Activated CD8-positive, alpha-beta memory T cell treated with anti-CD3 and anti-CD28 coated beads, Interleukin-2, amount 10 ng/mL, durations not matched to agents 7 days and 5 days (primary cell): ENCODE measurements at regions of chr19 and their contacts with region 1.

Region 1: GRCh38 chr19:10269333-10270179 is 1.4 kb upstream of the ICAM1 start:
- DNase-seq: peak; percentile 93
- ATAC-seq: peak; percentile 68
- H3K4me3 Mint-ChIP-seq: peak overlapping the region; percentile 81
- H3K27ac Mint-ChIP-seq: peak overlapping the region; percentile 89
- H3K4me1 Mint-ChIP-seq: peaks cover 32% of the 10 kb centered on the region
- H3K27me3 Mint-ChIP-seq: no peaks in the 10 kb centered on the region

Region 2: GRCh38 chr19:10069046-10069445 is 200.5 kb before region 1 on chr19:
- CTCF ChIA-PET with region 1: no interaction called
- DNase-seq: no peak
- ATAC-seq: no peak
- H3K4me3 Mint-ChIP-seq: no peak overlapping the region
- H3K27ac Mint-ChIP-seq: no peak overlapping the region
- H3K4me1 Mint-ChIP-seq: peaks cover 10% of the 10 kb centered on the region
- H3K27me3 Mint-ChIP-seq: peaks cover 7% of the 10 kb centered on the region

Region 3: DNA sequence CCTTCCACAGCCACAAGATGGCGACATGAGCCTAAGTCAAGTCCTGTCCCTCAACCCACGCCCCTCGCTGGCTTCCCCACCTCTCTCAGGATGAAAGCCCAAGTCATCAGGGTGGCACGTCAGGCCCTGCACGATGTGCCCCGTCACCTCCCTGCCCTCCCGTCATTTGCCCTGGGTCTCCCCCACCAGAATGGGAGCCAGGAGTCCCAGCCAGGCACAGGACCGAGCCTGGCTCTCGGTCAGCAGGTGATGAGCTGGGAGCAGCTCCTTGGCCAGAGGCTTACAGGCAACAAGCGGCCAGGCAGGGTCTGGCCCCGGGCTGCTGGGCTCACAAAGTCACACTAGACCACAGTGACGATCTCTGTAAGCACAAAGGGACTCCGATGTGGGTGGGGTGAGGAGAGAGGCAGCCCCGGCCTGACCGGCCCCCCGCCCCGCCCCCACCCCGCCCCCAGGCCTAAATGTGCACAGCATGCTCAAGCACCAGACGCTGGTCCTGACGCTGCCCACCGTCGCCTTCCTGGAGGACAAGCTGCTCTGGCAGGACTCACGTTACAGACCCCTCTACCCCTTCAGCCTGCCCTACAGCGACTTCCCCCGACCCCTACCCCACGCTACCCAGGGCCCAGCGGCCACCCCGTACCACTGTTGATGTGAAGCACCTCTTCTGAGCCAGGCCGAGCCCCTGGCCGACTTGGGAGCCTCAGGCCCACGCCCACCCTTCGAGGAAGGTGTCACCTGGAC is 10.2 kb before region 1 on chr19:
- CTCF ChIA-PET with region 1: interaction called, 125 read pairs
- DNase-seq: peak; percentile 96
- ATAC-seq: peak; percentile 78
- H3K4me3 Mint-ChIP-seq: no peak overlapping the region
- H3K27ac Mint-ChIP-seq: peak overlapping the region; percentile 67
- H3K4me1 Mint-ChIP-seq: peaks cover 37% of the 10 kb centered on the region
- H3K27me3 Mint-ChIP-seq: no peaks in the 10 kb centered on the region

Region 4: GRCh38 chr19:10292206-10292788 is 22.7 kb after region 1 on chr19:
- CTCF ChIA-PET with region 1: interaction called, 116 read pairs
- DNase-seq: peak; percentile 87
- ATAC-seq: peak; percentile 67
- H3K4me3 Mint-ChIP-seq: peak overlapping the region; percentile 68
- H3K27ac Mint-ChIP-seq: peak overlapping the region; percentile 24
- H3K4me1 Mint-ChIP-seq: peaks cover 64% of the 10 kb centered on the region
- H3K27me3 Mint-ChIP-seq: peaks cover 81% of the 10 kb centered on the region

Region 5: GRCh38 chr19:10368101-10368803 is 98.7 kb after region 1 on chr19:
- CTCF ChIA-PET with region 1: interaction called, 11 read pairs
- DNase-seq: no peak
- ATAC-seq: peak; percentile 39
- H3K4me3 Mint-ChIP-seq: no peak overlapping the region
- H3K27ac Mint-ChIP-seq: no peak overlapping the region
- H3K4me1 Mint-ChIP-seq: peaks cover 18% of the 10 kb centered on the region
- H3K27me3 Mint-ChIP-seq: no peaks in the 10 kb centered on the region

Region 6: DNA sequence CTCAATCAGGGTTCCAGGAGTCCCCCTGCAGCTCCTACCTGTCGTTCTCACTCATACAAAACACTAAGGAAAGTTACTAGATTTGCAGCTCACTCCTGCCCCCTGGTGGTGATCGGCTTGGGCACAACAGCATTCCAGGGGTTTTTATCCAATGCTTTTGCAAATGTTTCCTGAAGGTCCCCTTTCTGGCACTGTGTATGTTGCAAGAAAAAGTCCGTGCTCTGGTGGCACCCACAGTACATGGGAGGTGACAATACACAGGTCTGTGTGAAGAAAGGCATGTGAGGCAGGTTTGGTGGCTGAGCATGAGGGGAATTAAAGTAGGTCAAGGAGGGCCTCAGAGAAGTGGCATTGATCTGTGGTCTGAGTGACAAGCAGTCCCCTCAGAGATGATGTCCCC is 119.4 kb after region 1 on chr19:
- CTCF ChIA-PET with region 1: interaction called, 320 read pairs
- DNase-seq: peak; percentile 85
- ATAC-seq: peak; percentile 73
- H3K4me3 Mint-ChIP-seq: no peak overlapping the region
- H3K27ac Mint-ChIP-seq: peak overlapping the region; percentile 3
- H3K4me1 Mint-ChIP-seq: peaks cover 6% of the 10 kb centered on the region
- H3K27me3 Mint-ChIP-seq: no peaks in the 10 kb centered on the region

Region 7: DNA sequence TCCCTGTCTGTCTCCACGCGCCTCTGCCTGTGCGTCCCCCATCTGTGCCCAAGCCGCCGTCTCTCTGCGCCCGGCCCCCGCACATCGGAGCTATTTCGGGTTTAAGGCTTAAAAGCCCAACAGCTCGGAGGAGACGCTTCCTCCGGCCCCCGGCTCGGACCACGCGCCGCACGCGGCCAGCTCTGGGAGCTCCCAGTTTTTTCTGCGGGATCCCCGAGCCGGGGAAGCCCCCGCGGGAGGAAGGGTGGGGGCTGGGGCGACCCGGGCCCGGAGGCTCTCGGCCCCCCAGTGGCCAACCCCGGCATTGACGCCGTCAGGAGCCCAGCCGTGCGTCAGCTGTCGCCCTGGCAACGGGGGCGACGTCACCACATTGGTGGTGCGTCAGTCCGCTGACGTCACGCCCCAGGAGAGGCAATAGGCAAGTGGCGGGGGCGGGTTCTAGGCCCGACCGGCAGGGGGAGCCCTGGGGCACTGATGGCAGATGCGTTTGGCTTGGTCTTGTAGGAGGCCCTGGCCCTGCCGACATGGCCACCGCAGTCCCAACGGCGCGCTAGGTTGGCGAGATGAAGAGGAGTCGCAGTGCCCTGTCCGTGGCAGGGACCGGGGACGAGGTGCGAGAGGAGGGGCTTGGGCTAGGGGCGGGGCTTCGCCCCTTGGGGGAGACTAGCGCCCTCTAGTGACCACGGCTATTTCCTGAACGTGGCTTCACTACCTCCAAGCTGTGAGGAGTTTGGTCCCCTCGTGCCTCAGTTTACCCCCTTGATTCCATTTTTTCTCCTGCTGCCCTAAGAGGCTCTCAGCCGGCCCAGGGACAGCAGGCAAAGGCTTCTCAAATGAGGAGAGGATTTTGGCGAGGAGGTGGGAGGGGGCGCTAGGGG is 147.1 kb after region 1 on chr19:
- CTCF ChIA-PET with region 1: interaction called, 25 read pairs
- DNase-seq: peak; percentile 98
- ATAC-seq: peak; percentile 48
- H3K4me3 Mint-ChIP-seq: peak overlapping the region; percentile 76
- H3K27ac Mint-ChIP-seq: peak overlapping the region; percentile 95
- H3K4me1 Mint-ChIP-seq: peaks cover 61% of the 10 kb centered on the region
- H3K27me3 Mint-ChIP-seq: peaks cover 4% of the 10 kb centered on the region